Panc1 (cell line): ENCODE measurements at regions of chr19 and their contacts with region 1.

Region 1: DNA sequence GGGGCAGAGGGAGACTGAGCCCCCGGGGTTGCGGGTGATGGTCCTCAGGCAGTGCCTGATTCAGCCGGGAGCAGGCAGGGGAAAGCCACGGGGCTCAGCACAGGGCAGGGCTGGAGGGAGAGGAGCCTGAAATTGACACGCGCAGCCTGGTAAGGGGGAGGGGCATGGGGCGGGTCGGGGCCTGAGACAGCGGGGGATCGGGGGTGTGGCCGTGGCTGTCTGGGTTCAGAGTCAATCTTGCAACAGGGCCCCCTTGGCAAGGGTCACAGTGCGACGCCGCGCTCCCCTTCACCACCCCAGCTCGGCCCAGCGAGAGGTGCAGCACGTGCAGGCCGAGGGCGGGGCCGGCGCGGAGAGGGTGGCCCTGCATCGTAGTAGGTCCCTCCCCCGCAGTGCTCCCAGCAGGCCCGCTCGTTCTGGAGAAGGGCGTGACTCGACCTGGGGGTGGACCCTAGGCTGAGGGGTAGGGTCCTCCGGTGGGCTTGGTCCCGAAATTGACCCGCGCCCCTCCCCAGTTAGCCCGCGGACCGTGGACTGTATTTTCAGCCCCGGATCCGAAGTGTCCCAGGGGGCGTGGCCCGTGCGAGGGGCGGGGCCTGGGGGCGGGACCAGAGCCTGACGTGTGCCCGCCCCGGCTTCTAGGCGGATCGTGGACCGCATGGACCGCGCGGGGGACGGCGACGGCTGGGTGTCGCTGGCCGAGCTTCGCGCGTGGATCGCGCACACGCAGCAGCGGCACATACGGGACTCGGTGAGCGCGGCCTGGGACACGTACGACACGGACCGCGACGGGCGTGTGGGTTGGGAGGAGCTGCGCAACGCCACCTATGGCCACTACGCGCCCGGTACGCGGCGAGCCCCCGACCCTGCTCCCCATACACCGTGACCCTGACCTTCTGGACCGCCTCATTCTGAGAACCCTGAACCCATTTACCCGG is 6.0 kb downstream of the RCN3 start:
- DNase-seq: no peak
- ATAC-seq: peak; percentile 94
- H3K4me3 ChIP-seq: peak overlapping the region; percentile 52 to 60
- H3K27ac ChIP-seq: no peak overlapping the region
- H3K4me1 ChIP-seq: no peaks in the 10 kb centered on the region
- H3K27me3 ChIP-seq: no peaks in the 10 kb centered on the region
- CTCF ChIP-seq: no peak; the same call in 1 of the 2 replicates

Region 2: GRCh38 chr19:49515767-49516166 is 18.1 kb before region 1 on chr19:
- CTCF ChIA-PET with region 1: no interaction called
- POLR2A ChIA-PET with region 1: interaction called, 14 read pairs
- in situ Hi-C with region 1: no loop called
- intact Hi-C with region 1: no loop called
- DNase-seq: no peak
- ATAC-seq: no peak
- H3K4me3 ChIP-seq: no peak overlapping the region
- H3K27ac ChIP-seq: no peak overlapping the region
- H3K4me1 ChIP-seq: no peaks in the 10 kb centered on the region
- H3K27me3 ChIP-seq: no peaks in the 10 kb centered on the region
- CTCF ChIP-seq: no peak

Region 3: DNA sequence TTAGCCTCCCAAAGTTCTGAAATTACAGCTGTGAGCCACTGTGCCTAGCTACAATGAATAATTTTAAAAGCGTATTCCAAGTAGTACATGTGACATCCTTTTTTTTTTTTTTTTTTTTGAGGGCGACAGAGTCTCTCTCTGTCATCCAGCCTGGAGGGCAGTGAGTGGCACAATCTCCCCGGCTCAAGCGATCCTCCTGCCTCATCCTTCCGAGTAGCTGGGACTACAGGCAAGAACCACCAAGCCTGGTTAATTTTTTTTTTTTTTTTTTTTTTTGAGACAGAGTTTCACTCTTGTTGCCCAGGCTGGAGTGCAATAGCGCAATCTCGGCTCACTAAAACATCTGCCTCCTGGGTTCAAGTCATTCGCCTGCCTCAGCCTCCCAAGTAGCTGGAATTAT is 53.4 kb after region 1 on chr19:
- CTCF ChIA-PET with region 1: no interaction called
- POLR2A ChIA-PET with region 1: no interaction called
- in situ Hi-C with region 1: no loop called
- intact Hi-C with region 1: no loop called
- DNase-seq: no peak
- ATAC-seq: no peak
- H3K4me3 ChIP-seq: no peak overlapping the region
- H3K27ac ChIP-seq: no peak overlapping the region
- H3K4me1 ChIP-seq: no peaks in the 10 kb centered on the region
- H3K27me3 ChIP-seq: no peaks in the 10 kb centered on the region
- CTCF ChIP-seq: no peak